ENCODE measurements at regions of chr11 and their contacts with region 1.

Region 1: DNA sequence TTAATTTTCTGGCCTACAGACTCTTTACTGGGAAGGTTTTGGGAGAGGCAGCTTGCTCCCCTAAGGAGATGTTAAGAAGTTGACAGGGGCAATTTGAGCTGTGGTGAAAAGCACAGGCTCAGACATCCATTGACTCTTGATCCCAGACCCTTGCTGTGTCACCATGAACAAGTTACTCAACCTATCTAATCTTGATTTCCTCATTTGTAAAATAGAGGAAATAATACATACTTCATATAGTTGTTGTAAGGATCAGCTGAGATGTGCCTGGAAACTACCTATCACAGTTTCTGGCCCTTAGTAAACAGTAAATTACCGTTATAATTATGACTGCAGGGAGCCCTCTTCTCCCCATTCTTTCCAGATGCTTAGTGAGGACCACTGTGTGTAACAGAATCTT is 16.6 kb upstream of the SCGB1D4 start:
- DNase-seq: no peak
- H3K4me3 ChIP-seq: no peak overlapping the region
- H3K27ac ChIP-seq: no peak overlapping the region
- H3K4me1 ChIP-seq: peaks cover 0 to 7% (median 0%) of the 10 kb centered on the region in 4 donors
- H3K27me3 ChIP-seq: peaks cover 0 to 26% of the 10 kb centered on the region in 2 donors
- CTCF ChIP-seq: no peak

Region 2: GRCh38 chr11:61851113-61851899 is 464.1 kb before region 1 on chr11:
- intact Hi-C with region 1: no loop called
- DNase-seq: peak in 1 of 2 donors; percentile 39
- H3K4me3 ChIP-seq: no peak overlapping the region
- H3K27ac ChIP-seq: peak overlapping the region; percentile 46 to 48
- H3K4me1 ChIP-seq: peaks cover 0 to 6% (median 0%) of the 10 kb centered on the region in 4 donors
- H3K27me3 ChIP-seq: no peaks in the 10 kb centered on the region
- CTCF ChIP-seq: no peak

Region 3: DNA sequence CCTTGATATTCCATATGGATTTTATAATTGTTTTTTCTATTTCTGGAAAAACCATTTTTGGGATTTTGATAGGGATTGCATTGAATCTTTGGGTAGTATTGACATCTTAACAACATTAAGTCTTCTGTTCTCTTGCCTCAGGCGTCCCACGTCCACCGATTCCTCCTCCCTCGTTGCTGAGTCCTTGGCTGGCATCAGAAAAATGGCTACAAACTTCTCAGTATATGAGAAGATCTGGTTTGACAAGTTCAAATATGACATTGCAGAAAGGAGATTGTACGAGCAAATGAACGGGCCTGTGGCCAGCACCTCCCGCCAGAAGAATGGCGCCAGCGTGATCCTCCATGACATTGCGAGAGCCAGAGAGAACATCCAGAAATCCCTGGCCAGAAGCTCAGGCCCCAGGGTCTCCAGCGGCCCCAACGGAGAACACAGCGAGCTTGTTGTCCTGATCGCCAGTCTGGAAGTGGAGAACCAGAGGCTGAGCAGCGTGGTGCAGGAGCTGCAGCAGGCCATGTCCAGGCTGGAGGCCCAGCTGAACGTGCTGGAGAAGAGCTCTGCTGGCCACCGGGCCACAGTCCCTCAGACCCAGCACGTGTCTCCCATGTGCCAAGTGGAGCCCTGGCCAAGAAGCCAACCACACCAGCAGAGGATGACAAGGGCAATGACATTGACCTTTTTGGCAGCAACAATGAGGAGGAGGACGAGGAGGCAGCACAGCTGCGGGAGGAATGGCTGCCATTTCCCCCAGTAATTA is 146.2 kb before region 1 on chr11:
- intact Hi-C with region 1: loop called (anchors 5 kb)
- DNase-seq: no peak
- H3K4me3 ChIP-seq: no peak overlapping the region
- H3K27ac ChIP-seq: no peak overlapping the region
- H3K4me1 ChIP-seq: no peaks in the 10 kb centered on the region
- H3K27me3 ChIP-seq: peaks cover 0 to 43% of the 10 kb centered on the region in 2 donors
- CTCF ChIP-seq: no peak

Region 4: DNA sequence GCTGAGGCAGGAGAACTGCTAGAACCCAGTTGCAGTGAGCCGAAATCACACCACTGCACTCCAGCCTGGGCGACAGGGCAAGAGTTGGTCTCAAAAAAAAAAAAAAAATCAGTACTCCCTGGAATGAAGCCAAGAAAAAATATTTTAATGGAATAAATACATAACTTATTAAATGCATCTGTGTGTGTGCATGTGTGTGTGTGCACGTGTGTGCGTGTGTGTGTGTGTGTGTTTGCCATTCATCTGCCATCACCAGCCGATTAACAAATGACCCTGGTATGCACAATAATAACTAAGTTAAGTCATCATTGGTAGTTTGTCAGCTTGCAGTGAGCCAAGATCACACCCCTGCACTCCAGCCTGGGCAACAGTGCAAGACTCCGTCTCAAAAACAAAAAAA is 68.4 kb after region 1 on chr11:
- intact Hi-C with region 1: no loop called
- DNase-seq: no peak
- H3K4me3 ChIP-seq: no peak overlapping the region
- H3K27ac ChIP-seq: no peak overlapping the region
- H3K4me1 ChIP-seq: peaks cover 0 to 5% (median 1%) of the 10 kb centered on the region in 4 donors
- H3K27me3 ChIP-seq: no peaks in the 10 kb centered on the region
- CTCF ChIP-seq: no peak